Activated CD8-positive, alpha-beta T cell treated with anti-CD3 and anti-CD28 coated beads, Interleukin-2, amount 10 ng/mL, durations not matched to agents 7 days and 5 days (primary cell): ENCODE measurements at regions of chr10 and their contacts with region 1.

Region 1: DNA sequence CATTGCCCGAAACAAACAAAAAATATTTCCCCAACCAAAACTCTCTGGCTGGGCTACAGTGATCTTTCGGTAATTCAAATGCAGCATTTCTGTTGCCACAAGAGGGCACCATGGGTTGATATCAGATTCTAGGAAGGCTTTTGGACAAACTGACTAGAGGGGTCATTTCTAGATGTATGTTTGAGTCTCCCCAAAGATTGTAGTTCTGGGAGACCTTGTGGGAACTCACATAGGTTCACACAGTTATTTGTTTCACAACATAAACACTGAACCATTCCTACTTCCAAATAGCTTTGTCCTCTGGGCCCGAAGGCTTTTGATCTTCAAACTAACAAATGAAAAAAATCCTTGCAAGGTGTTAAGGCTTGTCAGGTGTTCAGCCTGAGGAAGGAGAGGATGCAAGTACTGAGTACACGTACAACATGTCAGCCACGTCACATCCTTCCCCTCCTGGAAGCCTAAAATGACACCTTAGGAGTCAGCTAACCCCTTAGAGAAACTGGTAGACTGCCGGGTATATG is 37.0 kb upstream of the IL15RA start:
- DNase-seq: peak; percentile 78
- ATAC-seq: peak; percentile 81
- H3K4me3 Mint-ChIP-seq: peak overlapping the region; percentile 19
- H3K27ac Mint-ChIP-seq: peak overlapping the region; percentile 97
- H3K4me1 Mint-ChIP-seq: peaks cover 48% of the 10 kb centered on the region
- H3K27me3 Mint-ChIP-seq: no peaks in the 10 kb centered on the region

Region 2: DNA sequence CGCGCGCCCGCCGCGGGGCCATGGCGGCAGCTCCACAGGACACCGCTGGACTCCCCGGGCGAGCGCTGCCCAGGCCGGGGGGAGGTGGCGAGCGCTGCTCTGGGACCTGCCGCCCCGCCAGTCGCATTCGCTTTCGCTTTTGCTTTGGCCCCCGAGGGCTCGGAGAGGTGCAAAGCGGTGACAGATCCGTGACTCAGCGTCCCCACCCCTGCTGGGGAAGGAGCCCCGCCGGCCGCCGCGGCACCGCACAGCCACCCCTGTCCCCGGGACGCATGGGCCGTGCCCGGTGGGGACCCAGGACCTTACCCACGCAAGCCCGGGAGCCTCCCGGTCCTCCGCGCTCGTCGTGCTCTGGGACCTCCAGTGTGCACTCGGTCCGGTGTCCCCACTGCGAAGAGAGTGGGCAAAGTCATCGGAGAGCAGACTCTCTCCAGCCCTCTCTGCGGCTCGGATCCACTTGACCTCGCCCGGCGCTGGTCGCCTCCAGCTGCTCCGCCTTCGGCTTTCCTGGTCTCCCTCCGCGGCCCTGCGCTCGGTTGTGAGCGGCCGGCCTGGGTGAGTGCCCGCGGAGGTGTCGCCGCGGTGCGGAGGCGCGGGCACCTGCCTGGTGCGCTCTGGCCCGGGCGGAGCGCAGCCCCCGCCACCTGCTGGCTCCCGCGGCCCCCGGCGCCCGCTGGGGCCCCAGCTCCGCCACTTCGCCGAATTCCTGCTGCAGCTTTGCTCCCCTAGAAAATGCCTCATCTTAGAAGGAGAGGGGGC is 36.7 kb before region 1 on chr10 and contains the start of gene IL15RA:
- CTCF ChIA-PET with region 1: interaction called, 16 read pairs
- POLR2A ChIA-PET with region 1: interaction called, 4 read pairs
- DNase-seq: peak; percentile 93
- ATAC-seq: peak; percentile 87
- H3K4me3 Mint-ChIP-seq: peak within 1 kb of the TSS; percentile 97
- H3K27ac Mint-ChIP-seq: peak within 1 kb of the TSS; percentile 98
- H3K4me1 Mint-ChIP-seq: peaks cover 26% of the 10 kb centered on the region
- H3K27me3 Mint-ChIP-seq: peaks cover 5% of the 10 kb centered on the region
- total RNA-seq, gene IL15RA: 17.2 to 18.1 TPM

Region 3: GRCh38 chr10:6033954-6034353 is 19.7 kb after region 1 on chr10:
- CTCF ChIA-PET with region 1: interaction called, 17 read pairs
- POLR2A ChIA-PET with region 1: interaction called, 3 read pairs
- DNase-seq: no peak
- ATAC-seq: no peak
- H3K4me3 Mint-ChIP-seq: no peak overlapping the region
- H3K27ac Mint-ChIP-seq: peak overlapping the region; percentile 15
- H3K4me1 Mint-ChIP-seq: peaks cover 65% of the 10 kb centered on the region
- H3K27me3 Mint-ChIP-seq: no peaks in the 10 kb centered on the region

Region 4: DNA sequence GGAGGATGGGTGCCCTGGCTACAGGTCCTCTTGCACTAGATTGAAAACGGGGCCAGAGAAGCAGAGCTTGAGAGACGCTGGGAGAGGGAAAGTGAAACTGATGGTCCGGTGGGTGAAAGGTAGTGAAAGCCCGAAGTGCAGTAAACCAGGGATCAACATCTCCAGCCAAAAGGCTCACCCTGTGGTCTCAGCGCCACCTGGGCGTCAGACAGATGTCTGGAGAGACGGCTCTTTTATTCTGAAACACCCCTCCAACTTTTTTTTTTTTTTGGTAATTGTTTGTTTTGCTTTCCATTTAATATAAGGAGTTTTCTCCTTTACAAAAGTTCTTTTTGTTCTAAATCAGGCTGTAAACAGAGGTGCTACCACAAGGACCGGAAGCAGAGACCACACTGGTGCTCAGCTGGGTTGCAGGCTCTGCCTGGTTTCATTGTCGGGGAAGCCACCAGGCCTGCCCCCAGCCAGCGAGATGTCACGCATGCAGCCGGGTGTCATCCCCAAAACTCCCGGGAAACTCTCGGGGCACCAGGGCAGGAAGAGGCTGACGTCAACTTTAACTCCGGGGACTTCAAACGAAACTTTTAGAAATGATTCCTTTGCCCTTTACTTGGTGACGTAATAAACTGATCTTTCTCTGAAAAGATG is 36.6 kb after region 1 on chr10:
- CTCF ChIA-PET with region 1: interaction called, 55 read pairs
- POLR2A ChIA-PET with region 1: interaction called, 14 read pairs
- DNase-seq: peak; percentile 96
- ATAC-seq: peak; percentile 74
- H3K4me3 Mint-ChIP-seq: peak overlapping the region; percentile 88
- H3K27ac Mint-ChIP-seq: peak overlapping the region; percentile 98
- H3K4me1 Mint-ChIP-seq: peaks cover 85% of the 10 kb centered on the region
- H3K27me3 Mint-ChIP-seq: no peaks in the 10 kb centered on the region

Region 5: GRCh38 chr10:6062101-6062771 is 47.9 kb after region 1 on chr10 and contains the start of gene IL2RA:
- CTCF ChIA-PET with region 1: interaction called, 20 read pairs
- POLR2A ChIA-PET with region 1: interaction called, 8 read pairs
- DNase-seq: peak; percentile 73
- ATAC-seq: peak; percentile 74
- H3K4me3 Mint-ChIP-seq: peak within 1 kb of the TSS; percentile 91
- H3K27ac Mint-ChIP-seq: peak within 1 kb of the TSS; percentile 92
- H3K4me1 Mint-ChIP-seq: peaks cover 72% of the 10 kb centered on the region
- H3K27me3 Mint-ChIP-seq: no peaks in the 10 kb centered on the region
- total RNA-seq, gene IL2RA: 174 to 177 TPM

Region 6: DNA sequence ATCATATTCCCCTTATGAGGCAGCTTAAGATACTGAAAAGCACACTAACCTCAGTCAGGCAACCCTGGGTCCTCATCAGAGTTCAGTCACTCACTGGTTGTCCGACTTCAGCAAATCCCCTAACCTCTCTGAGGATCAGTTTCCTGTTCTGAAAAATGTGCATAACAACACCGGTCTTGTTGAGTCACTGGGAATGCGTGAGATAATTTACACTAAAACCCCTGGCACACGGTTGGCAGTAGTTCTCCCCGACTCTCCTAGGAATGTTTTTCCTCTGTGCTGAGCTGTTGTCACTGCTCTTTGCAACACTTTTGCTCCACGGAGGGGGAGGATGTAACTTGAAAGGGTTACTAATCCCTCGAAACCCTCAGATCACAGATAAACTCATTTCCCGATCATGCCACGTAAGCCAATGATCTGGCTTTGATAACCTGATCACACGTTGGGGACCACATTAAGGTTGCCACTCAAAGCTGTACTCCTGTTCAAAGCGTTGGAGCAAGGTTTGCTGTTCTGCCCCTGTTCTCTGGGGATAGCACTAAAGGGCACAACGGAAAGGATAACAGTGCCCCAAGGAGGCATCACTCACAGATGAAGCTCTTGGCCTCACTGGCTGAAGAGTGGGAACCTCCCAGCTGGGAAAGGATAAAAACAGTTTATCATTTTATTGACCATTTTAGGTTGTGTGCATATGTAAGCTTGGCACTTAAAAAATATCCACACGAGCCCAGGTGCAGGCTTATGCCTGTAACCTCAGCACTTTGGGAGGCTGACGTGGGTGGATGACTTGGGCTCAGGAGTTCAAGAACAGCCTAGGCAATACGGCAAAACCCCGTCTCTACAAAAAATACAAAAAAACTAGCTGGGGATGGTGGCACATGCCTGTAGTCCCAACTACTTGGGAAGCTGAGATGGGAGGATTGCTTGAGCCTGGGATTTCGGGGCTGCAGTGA is 69.5 kb after region 1 on chr10:
- CTCF ChIA-PET with region 1: interaction called, 55 read pairs
- POLR2A ChIA-PET with region 1: no interaction called
- DNase-seq: peak; percentile 74
- ATAC-seq: peak; percentile 67
- H3K4me3 Mint-ChIP-seq: peak overlapping the region; percentile 64
- H3K27ac Mint-ChIP-seq: peak overlapping the region; percentile 86
- H3K4me1 Mint-ChIP-seq: peaks cover 78% of the 10 kb centered on the region
- H3K27me3 Mint-ChIP-seq: no peaks in the 10 kb centered on the region

Region 7: DNA sequence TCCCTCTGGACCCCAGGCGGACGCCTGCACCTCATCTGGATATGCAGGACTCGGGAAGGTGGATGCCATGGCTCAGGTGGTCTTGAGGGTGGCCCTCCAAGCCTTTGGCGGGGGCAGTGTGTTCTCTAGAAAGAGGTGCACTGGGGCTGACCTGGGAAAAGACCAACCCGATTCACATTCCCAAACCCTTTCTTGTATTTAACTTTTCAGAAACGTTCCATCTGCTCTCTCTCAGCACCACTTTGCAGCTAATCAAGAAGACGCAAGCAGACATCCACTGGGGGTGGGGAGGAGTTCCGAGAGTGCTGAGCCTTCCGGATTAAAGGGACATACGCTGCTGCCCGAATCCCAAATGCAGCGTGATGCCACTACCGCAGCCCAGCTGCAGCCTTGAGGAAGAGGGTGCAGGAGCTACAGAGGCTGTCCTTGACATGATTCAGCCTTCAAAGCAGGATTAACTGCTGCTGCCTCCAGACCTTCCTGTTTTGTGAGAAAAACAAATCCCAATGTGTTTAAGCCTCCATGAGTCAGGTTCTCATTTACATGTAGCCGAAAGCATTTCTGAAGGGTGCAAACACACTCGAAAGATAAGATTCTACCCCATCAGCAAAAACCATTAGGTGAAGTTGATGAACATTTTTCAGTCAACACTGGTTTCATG is 114.4 kb after region 1 on chr10:
- CTCF ChIA-PET with region 1: no interaction called
- POLR2A ChIA-PET with region 1: no interaction called
- DNase-seq: no peak
- ATAC-seq: no peak
- H3K4me3 Mint-ChIP-seq: no peak overlapping the region
- H3K27ac Mint-ChIP-seq: no peak overlapping the region
- H3K4me1 Mint-ChIP-seq: peaks cover 32% of the 10 kb centered on the region
- H3K27me3 Mint-ChIP-seq: peaks cover 8% of the 10 kb centered on the region